Right ventricle myocardium inferior (tissue), 1 donor: ENCODE measurements at regions of chr9 and their contacts with region 1.

Region 1: DNA sequence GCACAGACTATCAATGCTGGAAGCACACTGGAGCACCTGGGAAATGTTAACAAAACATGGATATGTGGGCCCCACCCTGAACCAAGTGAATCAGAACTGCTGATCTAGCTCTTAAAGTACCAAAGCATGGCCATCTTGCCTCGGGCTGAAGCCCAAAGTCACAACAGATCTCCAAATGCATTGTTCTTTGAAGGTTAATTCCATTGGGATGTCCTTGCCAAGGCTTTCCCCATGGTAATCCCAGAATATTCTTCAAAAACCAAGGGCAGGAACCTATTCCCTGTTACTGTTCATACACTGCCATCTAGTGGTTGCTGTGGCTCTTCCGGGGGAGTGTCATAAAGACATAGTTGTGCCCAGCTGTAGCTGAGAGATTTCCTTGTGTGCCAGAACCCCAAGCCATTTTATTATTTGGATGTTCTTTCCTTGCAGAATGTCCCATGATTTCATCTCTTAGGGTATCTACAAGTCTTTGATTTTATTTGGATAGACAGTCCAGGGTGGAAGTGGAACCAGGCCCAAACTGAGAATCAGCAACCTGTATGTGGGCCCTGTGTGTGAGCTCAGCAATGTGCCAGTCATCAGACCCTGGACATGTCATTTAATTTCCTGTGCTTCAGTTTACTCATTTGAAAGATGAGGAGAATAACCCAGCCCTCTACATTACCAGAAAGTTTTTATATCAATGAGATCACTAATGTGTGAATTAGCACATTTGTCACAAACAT is 290.0 kb downstream of the ACTL7B start:
- DNase-seq: no peak
- ATAC-seq: peak; percentile 89

Region 2: DNA sequence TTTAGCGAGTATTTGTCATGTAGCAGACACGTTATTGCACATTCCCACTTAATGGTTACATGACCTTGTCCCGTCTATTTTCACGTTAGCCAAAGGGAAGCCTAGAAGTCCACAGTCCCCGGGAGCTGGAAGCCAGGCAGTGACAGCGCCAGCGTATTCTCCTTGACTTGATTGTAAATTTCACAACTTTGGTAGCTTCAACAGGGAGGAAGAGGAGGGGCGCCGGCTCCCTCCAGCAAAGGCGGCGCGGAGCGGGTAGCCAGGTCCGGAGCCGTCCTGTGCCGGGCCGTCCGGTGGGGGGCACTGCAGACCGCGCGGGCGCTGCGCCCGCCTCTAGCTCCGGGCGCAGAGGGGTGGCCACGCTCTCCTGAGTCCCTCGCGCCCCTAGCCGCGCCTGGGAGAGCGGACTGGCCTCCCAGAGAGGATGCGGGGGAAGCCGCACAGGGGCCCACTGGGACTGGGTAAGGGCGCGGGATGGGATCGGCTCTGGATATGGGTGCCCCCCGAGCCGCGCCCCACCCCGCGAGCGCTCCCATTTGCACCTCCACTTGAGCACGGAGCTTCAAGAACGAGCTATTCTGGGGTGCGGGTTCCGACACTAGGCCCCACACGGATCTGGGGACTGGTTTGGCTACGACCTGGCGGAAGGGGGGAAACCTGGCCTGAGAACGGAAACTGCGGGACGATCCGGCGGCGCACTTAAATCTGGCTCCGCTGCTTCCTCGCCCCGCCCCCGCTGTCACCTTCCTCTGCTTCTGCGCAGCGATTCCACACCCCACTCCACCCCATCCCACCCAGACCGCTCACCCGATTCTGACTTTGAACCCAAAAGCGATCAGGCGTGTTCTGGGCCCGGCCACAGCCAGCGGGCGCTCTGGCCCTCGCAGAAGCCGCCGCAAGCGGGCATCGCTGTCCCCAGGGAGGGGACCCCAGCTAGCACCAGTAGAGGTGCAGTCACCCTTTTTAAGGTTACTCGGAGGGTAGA is 1100.1 kb before region 1 on chr9:
- intact Hi-C with region 1: loop called (anchors 2 kb)
- DNase-seq: peak; percentile 91
- ATAC-seq: peak; percentile 99

Region 3: GRCh38 chr9:107484117-107484723 is 1081.6 kb before region 1 on chr9:
- intact Hi-C with region 1: loop called (anchors 5 kb)
- DNase-seq: no peak
- ATAC-seq: peak; percentile 48